K562 (cell line): ENCODE measurements at regions of chr10 and their contacts with region 1.

Region 1: GRCh38 chr10:104304962-104305361 is 33.3 kb downstream of the ITPRIP start:
- DNase-seq: no peak
- ATAC-seq: no peak
- H3K4me3 ChIP-seq: no peak overlapping the region
- H3K27ac ChIP-seq: no peak overlapping the region
- H3K4me1 ChIP-seq: no peaks in the 10 kb centered on the region; a peak in 3 of 5 replicates
- H3K27me3 ChIP-seq: no peaks in the 10 kb centered on the region
- CTCF ChIP-seq: no peak
- EP300 ChIP-seq: no peak
- POLR2A ChIP-seq: no peak
- RAD21 ChIP-seq: no peak

Region 2: GRCh38 chr10:104317195-104317767 is 12.3 kb after region 1 on chr10:
- CTCF ChIA-PET with region 1: no interaction called
- POLR2A ChIA-PET with region 1: interaction called, 13 read pairs
- in situ Hi-C with region 1: no loop called
- intact Hi-C with region 1: no loop called
- DNase-seq: no peak
- ATAC-seq: no peak
- H3K4me3 ChIP-seq: no peak overlapping the region
- H3K27ac ChIP-seq: no peak overlapping the region
- H3K4me1 ChIP-seq: no peaks in the 10 kb centered on the region; a peak in 2 of 5 replicates
- H3K27me3 ChIP-seq: no peaks in the 10 kb centered on the region
- CTCF ChIP-seq: no peak
- EP300 ChIP-seq: no peak
- POLR2A ChIP-seq: no peak
- RAD21 ChIP-seq: no peak